Natural killer cell (primary cell): ENCODE measurements at regions of chr19 and their contacts with region 1.

Region 1: GRCh38 chr19:46346821-46347571 is at the start of gene PPP5C:
- DNase-seq: peak; percentile 83 to 91
- ATAC-seq: peak; percentile 75 to 87 (median 82)
- H3K4me3 ChIP-seq: peak within 1 kb of the TSS; percentile 99
- H3K4me3 Mint-ChIP-seq: peak within 1 kb of the TSS; percentile 94
- H3K27ac ChIP-seq: peak within 1 kb of the TSS; percentile 90
- H3K27ac Mint-ChIP-seq: peak within 1 kb of the TSS; percentile 90 to 94
- H3K4me1 ChIP-seq: peaks cover 54% of the 10 kb centered on the region
- H3K4me1 Mint-ChIP-seq: peaks cover 48 to 54% of the 10 kb centered on the region in 2 donors
- H3K27me3 ChIP-seq: no peaks in the 10 kb centered on the region
- H3K27me3 Mint-ChIP-seq: peaks cover 0 to 4% of the 10 kb centered on the region in 2 donors
- CTCF ChIP-seq: peak; percentile 77
- total RNA-seq, gene PPP5C: 95.4 to 106 (median 98.4) TPM

Region 2: DNA sequence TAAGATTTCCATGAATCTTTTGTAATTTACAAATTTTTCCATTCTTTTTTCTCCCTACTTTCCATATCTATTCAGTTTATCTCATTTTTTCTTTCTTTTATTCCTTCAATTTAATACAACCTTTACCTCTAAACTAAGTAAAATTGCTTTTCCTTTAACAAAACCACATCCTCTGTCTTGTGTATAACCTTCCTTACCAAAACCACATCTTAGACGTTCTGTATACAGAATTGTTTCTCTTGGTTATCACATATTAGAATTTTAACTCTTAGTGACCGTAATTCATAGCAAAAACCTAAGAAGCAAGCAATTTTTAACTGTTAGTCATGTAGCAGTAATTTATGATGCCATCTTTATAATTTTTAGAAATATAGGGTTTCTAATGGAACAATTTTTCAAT is 14.9 kb after region 1 on chr19:
- intact Hi-C with region 1: loop called (anchors 2 kb)
- DNase-seq: peak in 1 of 2 donors; percentile 67
- ATAC-seq: peak; percentile 74 to 87 (median 75)
- H3K4me3 ChIP-seq: peak overlapping the region; percentile 1
- H3K4me3 Mint-ChIP-seq: peak overlapping the region; percentile 92
- H3K27ac ChIP-seq: no peak overlapping the region
- H3K27ac Mint-ChIP-seq: peak overlapping the region; percentile 27 to 85
- H3K4me1 ChIP-seq: peaks cover 46% of the 10 kb centered on the region
- H3K4me1 Mint-ChIP-seq: peaks cover 46 to 52% of the 10 kb centered on the region in 2 donors
- H3K27me3 ChIP-seq: no peaks in the 10 kb centered on the region
- H3K27me3 Mint-ChIP-seq: no peaks in the 10 kb centered on the region
- CTCF ChIP-seq: no peak